HEK293 (cell line): ENCODE measurements at regions of chr19 and their contacts with region 1.

Region 1: GRCh38 chr19:27777726-27778125 is 1435.2 kb downstream of the UQCRFS1 start:
- H3K4me3 ChIP-seq: no peak overlapping the region
- H3K27ac ChIP-seq: no peak overlapping the region
- H3K4me1 ChIP-seq: no peaks in the 10 kb centered on the region
- CTCF ChIP-seq: no peak

Region 2: GRCh38 chr19:27740396-27740795 is 37.3 kb before region 1 on chr19:
- CTCF ChIA-PET with region 1: no interaction called
- POLR2A ChIA-PET with region 1: no interaction called
- H3K4me3 ChIP-seq: no peak overlapping the region
- H3K27ac ChIP-seq: no peak overlapping the region
- H3K4me1 ChIP-seq: no peaks in the 10 kb centered on the region
- CTCF ChIP-seq: no peak

Region 3: DNA sequence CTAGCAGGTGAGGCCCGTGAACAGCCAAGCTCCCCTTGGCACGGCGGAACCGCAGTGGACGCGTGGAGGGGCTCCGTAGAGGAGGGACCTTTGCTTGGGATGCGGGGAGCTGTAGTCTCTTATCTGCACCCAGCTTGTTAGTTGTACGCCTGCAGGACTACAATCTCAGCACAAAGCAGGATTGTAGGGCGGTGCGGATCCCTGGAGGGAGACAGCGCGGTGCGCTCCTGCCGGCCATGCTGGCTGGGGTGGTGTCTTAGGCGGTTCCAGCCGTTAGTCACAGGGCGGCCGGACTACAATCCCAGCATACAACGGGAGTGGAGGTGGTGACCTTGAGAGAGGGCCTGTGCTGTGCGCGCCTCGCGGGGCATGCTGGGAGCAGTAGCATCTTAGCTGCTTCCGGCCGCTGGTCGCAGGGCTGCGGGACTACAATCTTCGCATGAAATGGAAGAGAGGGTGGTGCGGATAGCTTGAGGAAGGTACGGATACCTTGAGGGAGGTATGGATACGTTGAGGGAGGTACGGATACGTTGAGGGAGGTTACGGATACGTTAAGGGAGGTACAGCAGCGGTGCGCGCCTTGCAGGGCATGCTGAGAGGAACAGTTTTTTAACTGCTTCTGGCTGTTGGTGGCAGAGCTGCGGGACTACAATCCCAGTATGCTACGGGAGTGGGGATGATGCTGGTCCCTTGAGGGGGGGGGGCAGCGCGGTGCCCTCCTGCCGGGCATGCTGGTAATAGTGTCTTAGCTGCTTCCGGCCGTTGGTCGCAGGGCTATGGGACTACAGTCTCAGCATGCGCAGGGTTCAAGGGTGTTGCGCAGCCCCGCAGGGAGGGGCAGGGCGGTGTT is 16.1 kb after region 1 on chr19:
- CTCF ChIA-PET with region 1: interaction called, 6 read pairs
- POLR2A ChIA-PET with region 1: interaction called, 12 read pairs
- H3K4me3 ChIP-seq: peak overlapping the region; percentile 65
- H3K27ac ChIP-seq: peak overlapping the region; percentile 97
- H3K4me1 ChIP-seq: peaks cover 15% of the 10 kb centered on the region
- CTCF ChIP-seq: peak; percentile 76